Heart right ventricle (tissue), 16 donors: ENCODE measurements at regions of chr1 and their contacts with region 1.

Region 1: DNA sequence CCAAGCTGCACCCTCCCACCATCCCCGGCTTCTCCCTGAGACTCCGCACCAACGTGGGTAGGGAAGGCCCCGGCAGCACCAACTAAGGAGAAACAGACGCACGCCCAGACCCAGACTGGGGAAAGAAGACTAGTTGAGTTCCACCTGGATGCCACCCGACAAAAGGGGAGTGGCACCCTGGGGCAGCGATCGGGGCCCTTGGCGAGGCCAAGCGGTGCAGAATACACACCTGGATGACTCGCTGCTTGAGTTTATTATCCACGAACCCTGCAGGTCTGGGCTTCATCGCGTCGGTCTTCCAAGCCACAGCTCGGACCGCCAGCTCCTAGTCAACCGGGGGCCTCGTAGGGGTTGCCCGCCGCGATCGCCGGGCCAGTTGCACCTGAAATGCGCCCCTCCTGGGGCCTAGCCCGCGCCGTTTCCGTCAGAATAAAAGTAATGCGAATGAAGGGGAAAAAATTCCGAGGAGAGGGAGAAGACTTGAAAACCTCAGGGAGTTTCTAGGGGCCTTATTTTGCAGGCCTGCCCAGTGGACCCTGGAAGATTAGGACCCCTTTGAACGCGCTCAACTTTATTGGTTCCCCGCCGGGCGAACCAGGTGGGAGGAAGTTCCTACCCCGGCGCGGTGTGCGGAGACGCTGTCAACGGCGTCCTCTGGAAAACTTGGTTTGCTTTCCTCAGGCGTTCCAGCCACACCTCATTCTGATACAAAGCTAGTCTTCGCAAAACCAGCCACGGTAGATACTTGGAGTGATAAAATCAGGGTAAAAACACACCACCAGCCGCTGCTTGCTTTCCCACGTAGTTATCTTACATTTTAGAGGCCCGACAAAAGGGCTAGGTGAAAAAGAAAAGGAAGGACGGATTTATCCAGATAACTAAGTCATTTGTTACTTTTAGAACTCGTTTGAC is at the start of gene NVL:
- DNase-seq: peak; percentile 84 to 89
- ATAC-seq: peak; percentile 97 to 98 (median 98)
- H3K4me3 ChIP-seq: peak within 1 kb of the TSS; percentile 61 to 97 (median 81)
- H3K27ac ChIP-seq: peak within 1 kb of the TSS; percentile 86 to 99 (median 94)
- H3K4me1 ChIP-seq: peaks cover 5 to 35% (median 21%) of the 10 kb centered on the region in 9 donors
- H3K27me3 ChIP-seq: no peaks in the 10 kb centered on the region
- CTCF ChIP-seq: peak in 1 of 9 donors; percentile 11
- total RNA-seq, gene NVL: 7.7 to 14.0 (median 9.9) TPM

Region 2: DNA sequence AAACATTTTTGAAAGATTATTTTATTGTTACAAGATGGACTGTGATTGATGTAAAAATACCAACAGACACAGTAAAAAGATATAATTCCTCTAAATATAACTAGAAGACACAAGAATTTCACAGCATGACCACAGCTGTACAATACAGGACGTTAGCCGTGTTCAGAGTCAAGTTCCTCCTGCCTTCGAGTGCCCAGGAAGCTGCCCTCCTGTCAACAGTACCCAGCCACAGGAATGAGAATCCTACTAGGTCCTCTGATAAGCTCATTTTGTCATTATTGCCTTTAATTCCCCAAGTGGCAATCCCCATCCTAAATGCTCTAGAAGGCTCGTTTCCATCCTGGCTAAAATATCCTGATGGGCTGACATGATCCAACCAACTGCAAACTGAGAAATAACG is 634.2 kb before region 1 on chr1:
- intact Hi-C with region 1: loop called in 3 of 10 experiments (anchors 5 to 10 kb)
- DNase-seq: no peak
- ATAC-seq: no peak
- H3K4me3 ChIP-seq: no peak overlapping the region
- H3K27ac ChIP-seq: no peak overlapping the region
- H3K4me1 ChIP-seq: peaks cover 0 to 18% (median 0%) of the 10 kb centered on the region in 9 donors
- H3K27me3 ChIP-seq: no peaks in the 10 kb centered on the region
- CTCF ChIP-seq: no peak

Region 3: GRCh38 chr1:223712194-223712849 is 617.8 kb before region 1 on chr1 and contains the start of gene CAPN2:
- intact Hi-C with region 1: loop called in 1 of 10 experiments (anchors 10 kb)
- DNase-seq: peak; percentile 77 to 89
- ATAC-seq: peak; percentile 87 to 97 (median 94)
- H3K4me3 ChIP-seq: peak within 1 kb of the TSS; percentile 62 to 97 (median 90)
- H3K27ac ChIP-seq: peak within 1 kb of the TSS; percentile 89 to 99 (median 98)
- H3K4me1 ChIP-seq: peaks cover 16 to 83% (median 78%) of the 10 kb centered on the region in 9 donors
- H3K27me3 ChIP-seq: no peaks in the 10 kb centered on the region
- CTCF ChIP-seq: peak; percentile 61 to 91 (median 78)
- total RNA-seq, gene CAPN2: 65.6 to 104 (median 77.6) TPM

Region 4: DNA sequence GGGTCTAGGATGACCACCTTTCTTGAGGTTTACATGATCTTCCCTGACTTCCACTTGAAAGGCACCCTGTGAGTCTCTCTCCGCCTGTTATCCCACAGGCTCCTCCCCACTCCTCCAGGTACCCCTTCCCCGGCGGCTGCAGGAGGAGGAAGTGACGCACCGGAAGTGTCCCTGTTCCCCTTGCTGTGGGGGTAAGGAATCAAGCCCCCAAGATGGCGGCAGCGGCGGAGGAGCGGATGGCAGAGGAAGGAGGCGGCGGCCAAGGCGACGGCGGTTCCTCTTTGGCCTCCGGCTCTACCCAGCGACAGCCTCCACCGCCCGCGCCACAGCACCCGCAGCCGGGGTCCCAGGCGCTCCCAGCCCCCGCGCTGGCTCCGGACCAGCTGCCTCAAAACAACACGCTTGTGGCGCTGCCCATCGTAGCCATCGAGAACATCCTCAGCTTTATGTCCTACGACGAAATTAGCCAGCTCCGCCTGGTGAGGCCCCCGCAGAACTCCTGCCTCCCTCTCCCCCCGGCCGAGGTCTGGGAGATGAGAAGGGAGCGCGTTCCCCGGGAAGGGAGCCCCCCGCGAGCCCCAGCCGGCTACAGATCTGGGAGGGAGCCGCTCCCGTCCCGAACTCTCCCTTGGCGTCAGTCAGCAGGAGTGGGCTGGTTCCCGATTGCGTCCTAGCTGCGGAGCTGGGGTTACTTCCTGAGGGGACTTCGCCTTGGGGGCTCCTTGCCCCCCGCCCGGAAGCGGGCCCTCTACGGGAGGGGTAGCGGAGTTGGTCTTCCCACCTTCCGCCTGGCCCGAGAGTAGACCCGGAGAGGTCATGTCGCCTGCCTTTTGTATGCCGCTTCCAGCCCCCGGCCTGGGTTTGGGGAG is 215.9 kb before region 1 on chr1 and contains the start of gene FBXO28:
- intact Hi-C with region 1: loop called (anchors 1 to 5 kb)
- DNase-seq: peak; percentile 94 to 97
- ATAC-seq: peak; percentile 98 to 100 (median 99)
- H3K4me3 ChIP-seq: peak within 1 kb of the TSS; percentile 68 to 97 (median 89)
- H3K27ac ChIP-seq: peak within 1 kb of the TSS; percentile 80 to 98 (median 94)
- H3K4me1 ChIP-seq: peaks cover 0 to 35% (median 25%) of the 10 kb centered on the region in 9 donors
- H3K27me3 ChIP-seq: peaks cover 0 to 10% (median 0%) of the 10 kb centered on the region in 7 donors
- CTCF ChIP-seq: no peak
- total RNA-seq, gene FBXO28: 16.9 to 22.9 (median 21.1) TPM

Region 5: DNA sequence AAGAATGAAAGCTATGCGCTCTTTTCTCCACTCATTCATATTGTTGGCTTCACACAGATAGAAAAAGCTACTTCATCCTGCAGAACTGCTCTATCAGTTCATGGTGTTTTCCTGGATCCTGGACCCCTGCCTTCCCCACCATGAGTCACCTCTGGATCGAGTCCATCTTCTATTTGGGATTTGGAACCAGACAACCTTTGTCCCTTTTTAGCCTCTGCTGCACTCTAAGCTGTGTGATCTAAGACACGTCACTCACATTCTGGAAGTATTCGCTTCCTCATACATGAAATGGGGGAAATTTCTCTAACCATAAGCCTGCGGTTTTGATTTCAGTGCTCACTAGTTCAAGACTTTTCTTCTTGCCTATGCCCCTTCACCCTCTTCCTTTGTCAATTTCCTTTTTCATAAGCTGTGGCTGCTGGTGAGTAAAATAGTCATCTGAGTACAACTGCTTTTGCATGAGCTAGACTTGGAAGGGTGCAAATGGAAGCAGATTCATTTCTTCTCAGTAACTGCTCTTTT is 161.2 kb before region 1 on chr1:
- intact Hi-C with region 1: loop called in 1 of 10 experiments (anchors 10 kb)
- DNase-seq: peak in 1 of 2 donors; percentile 59
- ATAC-seq: peak; percentile 75 to 97 (median 90)
- H3K4me3 ChIP-seq: peak overlapping the region in 1 of 10 donors; percentile 5
- H3K27ac ChIP-seq: peak overlapping the region in 7 of 10 donors; percentile 26 to 84 (median 60)
- H3K4me1 ChIP-seq: peaks cover 4 to 24% (median 12%) of the 10 kb centered on the region in 9 donors
- H3K27me3 ChIP-seq: no peaks in the 10 kb centered on the region
- CTCF ChIP-seq: no peak

Region 6: GRCh38 chr1:224189561-224189960 is 140.5 kb before region 1 on chr1:
- intact Hi-C with region 1: loop called in 1 of 10 experiments (anchors 5 kb)
- DNase-seq: no peak
- ATAC-seq: no peak
- H3K4me3 ChIP-seq: no peak overlapping the region
- H3K27ac ChIP-seq: no peak overlapping the region
- H3K4me1 ChIP-seq: peaks cover 0 to 27% (median 14%) of the 10 kb centered on the region in 9 donors
- H3K27me3 ChIP-seq: no peaks in the 10 kb centered on the region
- CTCF ChIP-seq: no peak

Region 7: GRCh38 chr1:224356685-224357625 is 26.9 kb after region 1 on chr1 and contains the start of gene CNIH4:
- intact Hi-C with region 1: loop called in 1 of 10 experiments (anchors 1 kb)
- DNase-seq: peak; percentile 90 to 94
- ATAC-seq: peak; percentile 97 to 99 (median 99)
- H3K4me3 ChIP-seq: peak within 1 kb of the TSS; percentile 65 to 99 (median 93)
- H3K27ac ChIP-seq: peak within 1 kb of the TSS; percentile 25 to 95 (median 92)
- H3K4me1 ChIP-seq: peaks cover 7 to 37% (median 13%) of the 10 kb centered on the region in 9 donors
- H3K27me3 ChIP-seq: no peaks in the 10 kb centered on the region
- CTCF ChIP-seq: no peak
- total RNA-seq, gene CNIH4: 24.4 to 39.6 (median 27.4) TPM

Region 8: DNA sequence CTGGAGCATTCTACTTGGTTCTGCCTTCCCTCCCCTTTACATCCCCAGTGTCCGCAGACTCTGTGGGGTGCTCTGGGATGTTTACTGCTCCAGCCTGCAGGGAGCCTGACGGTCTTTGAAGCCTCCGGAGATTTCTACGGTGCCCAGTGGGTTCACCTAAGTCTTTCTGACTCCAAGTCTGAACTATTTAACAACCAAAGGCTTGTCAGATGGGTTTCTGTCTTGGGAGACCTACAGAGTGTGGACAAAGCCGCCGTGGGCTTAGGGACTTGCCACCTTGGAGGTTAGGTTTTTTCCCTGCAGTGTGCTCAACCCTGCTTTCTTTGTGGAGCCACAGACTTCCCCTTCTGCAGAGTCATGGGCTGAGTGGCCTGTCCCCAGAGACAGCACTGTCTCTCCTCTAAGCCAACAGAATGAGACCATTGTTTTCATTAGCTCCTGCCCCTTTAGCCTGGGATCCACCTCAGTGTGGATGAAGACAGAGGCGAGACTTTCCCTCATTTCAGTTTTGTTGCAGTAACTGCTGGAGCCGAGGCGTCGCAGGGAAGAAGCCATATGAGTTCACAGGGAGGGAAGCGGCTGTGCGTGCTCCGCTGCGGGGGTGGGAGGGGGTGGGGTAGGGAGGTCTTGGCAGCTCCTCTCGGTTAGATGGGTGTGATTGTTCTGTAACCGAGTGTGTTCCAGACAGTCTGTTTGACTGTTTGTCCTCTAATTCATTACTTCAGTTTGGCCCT is 406.7 kb after region 1 on chr1:
- intact Hi-C with region 1: no loop called
- DNase-seq: peak; percentile 16 to 20
- ATAC-seq: peak; percentile 46 to 74 (median 62)
- H3K4me3 ChIP-seq: peak overlapping the region in 1 of 10 donors; percentile 9
- H3K27ac ChIP-seq: peak overlapping the region in 6 of 10 donors; percentile 16 to 68 (median 43)
- H3K4me1 ChIP-seq: peaks cover 4 to 41% (median 26%) of the 10 kb centered on the region in 9 donors
- H3K27me3 ChIP-seq: peaks cover 0 to 5% (median 0%) of the 10 kb centered on the region in 7 donors
- CTCF ChIP-seq: no peak